ENCODE measurements at regions of chr6 and their contacts with region 1.

Region 1: GRCh38 chr6:41584668-41585205 is 38.6 kb downstream of the FOXP4 start:
- DNase-seq: no peak
- H3K4me3 ChIP-seq: no peak overlapping the region
- H3K27ac ChIP-seq: no peak overlapping the region
- H3K4me1 ChIP-seq: peaks cover 6 to 15% of the 10 kb centered on the region in 2 donors
- H3K27me3 ChIP-seq: no peaks in the 10 kb centered on the region
- CTCF ChIP-seq: no peak
- POLR2A ChIP-seq: no peak

Region 2: DNA sequence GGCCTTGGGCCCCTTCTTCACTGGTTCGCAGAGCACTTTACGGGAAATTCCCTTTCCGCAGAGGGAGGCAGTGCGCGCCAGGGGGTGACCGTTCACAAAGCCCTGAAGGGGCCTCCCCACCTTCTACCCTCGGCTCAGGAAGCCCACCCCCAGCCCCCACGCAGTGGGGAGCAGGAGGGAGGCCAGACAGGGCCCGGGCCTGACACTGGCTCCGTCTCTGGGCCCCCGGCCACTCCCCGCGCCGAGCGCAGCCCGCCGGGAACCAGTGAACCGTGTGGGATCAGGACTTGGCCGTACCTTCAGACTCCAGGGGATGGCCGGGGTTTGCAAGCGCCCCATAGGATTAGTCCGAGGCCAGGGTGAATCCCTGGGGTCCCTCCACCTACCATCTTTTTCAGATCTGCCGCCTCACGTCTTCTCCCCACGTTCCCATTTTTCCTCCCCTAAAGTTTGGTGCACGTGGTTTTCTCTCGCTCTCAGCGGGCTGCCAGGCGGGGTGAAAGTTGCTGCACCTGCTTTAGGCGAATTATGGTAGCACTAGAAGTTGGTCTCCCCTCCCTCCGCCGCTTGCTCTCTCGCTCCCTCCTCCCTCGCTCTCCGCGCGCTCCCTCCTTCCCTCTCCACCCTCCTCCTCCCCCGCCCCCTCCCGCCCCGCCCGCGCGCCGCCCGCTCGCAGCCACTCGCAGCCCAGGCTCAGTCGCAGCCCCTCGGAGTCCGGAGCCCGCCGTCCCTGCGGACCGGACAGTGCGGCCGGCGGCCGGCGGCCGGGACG is 38.8 kb before region 1 on chr6 and contains the start of gene FOXP4:
- intact Hi-C with region 1: loop called in 1 of 2 experiments (anchors 5 kb)
- DNase-seq: peak; percentile 90 to 95 (median 93)
- H3K4me3 ChIP-seq: peak within 1 kb of the TSS in 3 of 4 donors; percentile 76 to 97 (median 89)
- H3K27ac ChIP-seq: peak within 1 kb of the TSS in 3 of 5 donors; percentile 71 to 95 (median 74)
- H3K4me1 ChIP-seq: peaks cover 14 to 22% of the 10 kb centered on the region in 2 donors
- H3K27me3 ChIP-seq: no peaks in the 10 kb centered on the region
- CTCF ChIP-seq: no peak
- POLR2A ChIP-seq: no peak
- total RNA-seq, gene FOXP4: 1.6 to 17.3 (median 12.7) TPM